Endothelial cell of umbilical vein (primary cell): ENCODE measurements at regions of chr5 and their contacts with region 1.

Region 1: GRCh38 chr5:180670586-180671359 is 21.4 kb upstream of the FLT4 start:
- DNase-seq: peak; percentile 78
- H3K4me3 ChIP-seq: no peak overlapping the region
- H3K27ac ChIP-seq: no peak overlapping the region
- H3K4me1 ChIP-seq: no peaks in the 10 kb centered on the region
- H3K27me3 ChIP-seq: peaks cover 10% of the 10 kb centered on the region in 2 experiments
- CTCF ChIP-seq: peak; percentile 63 to 80
- POLR2A ChIP-seq: no peak

Region 2: GRCh38 chr5:180470966-180471582 is 199.7 kb before region 1 on chr5:
- CTCF ChIA-PET with region 1: no interaction called
- POLR2A ChIA-PET with region 1: no interaction called
- dilution Hi-C with region 1: no loop called
- intact Hi-C with region 1: loop called (anchors 5 kb)
- DNase-seq: peak; percentile 50
- H3K4me3 ChIP-seq: no peak overlapping the region
- H3K27ac ChIP-seq: no peak overlapping the region
- H3K4me1 ChIP-seq: no peaks in the 10 kb centered on the region
- H3K27me3 ChIP-seq: peaks cover 0 to 2% of the 10 kb centered on the region in 2 experiments
- CTCF ChIP-seq: peak; percentile 86
- POLR2A ChIP-seq: no peak

Region 3: GRCh38 chr5:180494060-180494509 is 176.7 kb before region 1 on chr5 and contains the start of gene CNOT6:
- CTCF ChIA-PET with region 1: no interaction called
- POLR2A ChIA-PET with region 1: no interaction called
- dilution Hi-C with region 1: no loop called
- intact Hi-C with region 1: loop called (anchors 5 kb)
- DNase-seq: peak; percentile 93
- H3K4me3 ChIP-seq: peak within 1 kb of the TSS; percentile 86 to 90 (median 87)
- H3K27ac ChIP-seq: peak within 1 kb of the TSS; percentile 74
- H3K4me1 ChIP-seq: peaks cover 7% of the 10 kb centered on the region
- H3K27me3 ChIP-seq: no peaks in the 10 kb centered on the region
- CTCF ChIP-seq: no peak
- POLR2A ChIP-seq: no peak
- total RNA-seq, gene CNOT6: 33.8 and 35.5 TPM in 2 replicates

Region 4: DNA sequence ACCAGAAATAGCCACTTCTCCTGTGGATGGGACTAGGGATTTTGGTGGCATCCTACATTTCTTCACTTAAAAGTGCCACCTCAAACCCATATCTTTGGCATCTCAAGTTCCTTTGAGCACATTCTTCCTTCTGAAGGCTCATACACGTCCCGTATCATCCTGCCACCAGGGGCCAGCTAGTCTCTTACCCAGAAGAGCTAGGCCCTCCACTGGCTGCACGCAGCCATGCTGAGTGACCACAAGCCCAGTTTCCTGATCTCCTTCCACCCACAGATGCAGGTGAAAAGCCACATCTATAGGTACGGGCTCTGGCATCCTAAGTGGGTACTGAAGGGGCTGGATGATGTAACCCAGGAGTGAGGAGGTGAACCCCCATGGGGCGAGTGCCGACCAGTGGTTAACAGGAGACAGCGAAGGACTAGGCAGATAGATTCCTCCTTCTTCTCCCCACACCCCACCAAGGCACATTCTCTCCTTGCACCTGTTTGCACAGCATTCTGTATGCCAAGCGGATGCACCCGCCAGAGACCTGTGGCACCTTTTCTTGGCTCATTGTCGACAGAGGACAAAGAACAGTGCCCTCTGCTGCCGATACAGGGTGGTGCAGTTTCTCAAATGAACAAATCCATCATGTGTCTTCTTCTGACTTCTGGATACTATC is 65.1 kb before region 1 on chr5:
- CTCF ChIA-PET with region 1: no interaction called
- POLR2A ChIA-PET with region 1: no interaction called
- dilution Hi-C with region 1: no loop called
- intact Hi-C with region 1: loop called (anchors 1 kb)
- DNase-seq: peak; percentile 59
- H3K4me3 ChIP-seq: no peak overlapping the region
- H3K27ac ChIP-seq: no peak overlapping the region
- H3K4me1 ChIP-seq: peaks cover 3% of the 10 kb centered on the region
- H3K27me3 ChIP-seq: no peaks in the 10 kb centered on the region
- CTCF ChIP-seq: peak; percentile 80 to 83
- POLR2A ChIP-seq: no peak

Region 5: GRCh38 chr5:180611140-180611850 is 59.5 kb before region 1 on chr5:
- CTCF ChIA-PET with region 1: interaction called, 3 read pairs
- POLR2A ChIA-PET with region 1: no interaction called
- dilution Hi-C with region 1: no loop called
- intact Hi-C with region 1: loop called (anchors 1 kb)
- DNase-seq: no peak
- H3K4me3 ChIP-seq: no peak overlapping the region
- H3K27ac ChIP-seq: no peak overlapping the region
- H3K4me1 ChIP-seq: no peaks in the 10 kb centered on the region
- H3K27me3 ChIP-seq: no peaks in the 10 kb centered on the region
- CTCF ChIP-seq: no peak
- POLR2A ChIP-seq: no peak

Region 6: DNA sequence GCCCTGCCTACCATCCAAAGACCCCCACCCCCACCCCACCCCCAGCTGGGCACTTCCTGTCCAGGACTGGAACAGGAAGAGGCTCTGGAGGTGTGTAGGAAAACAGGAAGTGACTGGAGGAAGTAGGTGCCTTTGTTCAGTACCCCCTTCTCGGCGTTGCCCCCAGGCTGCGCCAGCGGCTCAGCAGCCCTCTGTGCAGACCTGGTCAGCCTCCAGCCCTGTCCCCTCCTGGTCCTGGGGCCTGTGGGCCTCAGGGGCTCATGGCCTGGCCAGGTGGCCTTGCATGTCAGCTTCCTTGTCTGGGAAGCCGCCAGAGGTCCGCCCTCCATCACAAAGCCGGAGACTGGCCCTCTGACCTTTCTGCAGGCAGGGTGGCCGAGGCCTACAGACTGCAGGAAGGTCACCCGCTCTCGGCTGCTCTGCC is 47.4 kb before region 1 on chr5:
- CTCF ChIA-PET with region 1: interaction called, 4 read pairs
- POLR2A ChIA-PET with region 1: no interaction called
- dilution Hi-C with region 1: no loop called
- intact Hi-C with region 1: loop called (anchors 2 kb)
- DNase-seq: peak; percentile 23
- H3K4me3 ChIP-seq: no peak overlapping the region
- H3K27ac ChIP-seq: no peak overlapping the region
- H3K4me1 ChIP-seq: peaks cover 7% of the 10 kb centered on the region
- H3K27me3 ChIP-seq: no peaks in the 10 kb centered on the region
- CTCF ChIP-seq: no peak
- POLR2A ChIP-seq: no peak

Region 7: DNA sequence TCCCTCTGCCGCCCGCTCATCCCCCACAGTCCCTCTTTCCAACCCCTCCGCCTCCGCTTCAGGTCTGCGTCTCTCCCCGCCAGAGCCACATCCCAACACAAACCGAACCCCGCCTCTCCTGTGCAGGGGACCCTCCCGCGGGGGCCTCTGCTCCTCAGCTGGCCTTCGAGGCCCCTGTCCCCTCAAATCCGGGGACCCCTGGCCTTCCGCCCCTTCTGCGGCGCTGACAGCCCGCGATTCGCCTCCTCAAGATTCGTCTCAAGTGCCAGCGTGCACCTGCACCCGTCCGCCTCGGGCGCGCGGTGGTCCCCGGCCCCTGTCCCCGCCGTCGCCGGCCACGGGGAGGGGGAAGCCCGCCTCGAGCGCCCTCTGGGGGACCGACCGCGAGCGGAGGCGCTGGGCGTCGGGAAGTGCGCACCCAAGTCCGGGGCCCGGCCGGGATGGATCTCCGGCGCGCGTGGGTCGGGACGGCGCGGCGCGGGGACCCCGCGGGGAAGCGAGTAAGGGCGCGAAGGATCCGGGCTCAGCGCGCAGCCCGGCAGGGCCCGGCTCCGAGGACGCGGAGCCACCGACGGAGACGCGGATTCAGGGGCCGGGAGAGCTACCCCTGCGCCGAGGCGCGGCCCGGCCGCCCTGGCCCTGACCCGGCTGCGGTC is 22.0 kb before region 1 on chr5:
- CTCF ChIA-PET with region 1: interaction called, 3 read pairs
- POLR2A ChIA-PET with region 1: no interaction called
- dilution Hi-C with region 1: no loop called
- intact Hi-C with region 1: loop called (anchors 2 kb)
- DNase-seq: no peak
- H3K4me3 ChIP-seq: peak overlapping the region; percentile 21 to 62 (median 30)
- H3K27ac ChIP-seq: no peak overlapping the region
- H3K4me1 ChIP-seq: peaks cover 30% of the 10 kb centered on the region
- H3K27me3 ChIP-seq: peaks cover 3 to 13% of the 10 kb centered on the region in 2 experiments
- CTCF ChIP-seq: peak; percentile 35 to 53
- POLR2A ChIP-seq: no peak

Region 8: DNA sequence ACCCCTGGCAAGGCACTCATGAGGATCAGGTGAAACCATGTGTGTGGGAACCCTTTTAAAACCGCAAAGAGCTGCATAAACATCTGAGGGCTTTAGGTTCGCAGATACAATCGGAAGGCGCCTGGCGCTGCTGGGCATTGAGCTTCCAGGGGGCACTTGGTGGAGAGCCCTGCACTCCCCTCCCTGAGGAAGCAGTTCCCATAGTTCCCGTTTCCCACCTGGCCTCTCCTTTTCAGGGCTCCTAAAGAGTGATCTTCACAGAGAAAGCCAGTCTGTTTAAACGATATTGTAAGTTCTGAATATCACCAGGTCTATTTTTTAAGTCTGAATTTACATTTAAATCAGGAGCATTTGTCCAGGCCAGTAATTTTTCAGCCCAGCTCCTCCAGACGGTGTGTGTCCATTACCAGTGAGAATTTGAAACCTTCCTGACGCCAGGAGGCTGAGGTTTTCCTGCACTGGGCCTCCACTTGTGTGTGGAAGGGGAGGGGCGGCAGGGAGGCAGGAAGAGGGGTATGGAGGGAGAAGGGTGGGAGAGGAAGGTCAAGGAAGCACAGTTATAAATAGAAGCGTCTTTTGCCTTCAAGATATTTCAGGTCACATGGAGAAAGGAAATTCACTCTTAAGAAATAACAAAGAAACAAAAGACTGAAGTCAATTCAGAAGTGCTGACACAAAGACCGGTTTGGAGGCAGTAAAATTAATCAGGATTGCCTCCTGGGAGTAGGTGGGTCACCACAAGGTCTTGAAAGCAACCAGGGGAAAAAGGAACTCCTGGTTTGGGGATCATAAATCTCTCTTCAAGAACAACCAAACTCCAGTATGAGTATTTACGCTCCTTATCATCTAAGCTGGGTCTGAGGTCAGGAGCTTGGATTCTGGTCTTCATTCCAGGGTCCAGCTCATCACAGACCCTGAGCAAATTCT is 146.1 kb after region 1 on chr5:
- CTCF ChIA-PET with region 1: no interaction called
- POLR2A ChIA-PET with region 1: no interaction called
- dilution Hi-C with region 1: no loop called
- intact Hi-C with region 1: no loop called
- DNase-seq: peak; percentile 83
- H3K4me3 ChIP-seq: no peak overlapping the region
- H3K27ac ChIP-seq: peak overlapping the region; percentile 39
- H3K4me1 ChIP-seq: peaks cover 24% of the 10 kb centered on the region
- H3K27me3 ChIP-seq: no peaks in the 10 kb centered on the region
- CTCF ChIP-seq: no peak
- POLR2A ChIP-seq: no peak